Heart left ventricle (tissue), 16 donors: ENCODE measurements at regions of chr6 and their contacts with region 1.

Region 1: GRCh38 chr6:109705258-109705657 is 14.2 kb downstream of the FIG4 start:
- DNase-seq: peak; percentile 72 to 79 (median 75)
- ATAC-seq: peak; percentile 95 to 98 (median 96)
- H3K4me3 ChIP-seq: no peak overlapping the region
- H3K27ac ChIP-seq: no peak overlapping the region
- H3K4me1 ChIP-seq: peaks cover 0 to 56% (median 4%) of the 10 kb centered on the region in 12 donors
- H3K27me3 ChIP-seq: no peaks in the 10 kb centered on the region
- CTCF ChIP-seq: peak; percentile 89 to 99 (median 98)
- POLR2A ChIP-seq: no peak

Region 2: GRCh38 chr6:109783250-109783986 is 78.2 kb after region 1 on chr6:
- intact Hi-C with region 1: loop called in 5 of 10 experiments (anchors 1 to 10 kb)
- DNase-seq: no peak
- ATAC-seq: no peak
- H3K4me3 ChIP-seq: no peak overlapping the region
- H3K27ac ChIP-seq: no peak overlapping the region
- H3K4me1 ChIP-seq: no peaks in the 10 kb centered on the region
- H3K27me3 ChIP-seq: no peaks in the 10 kb centered on the region
- CTCF ChIP-seq: peak in 10 of 12 donors; percentile 12 to 42 (median 31)
- POLR2A ChIP-seq: no peak

Region 3: DNA sequence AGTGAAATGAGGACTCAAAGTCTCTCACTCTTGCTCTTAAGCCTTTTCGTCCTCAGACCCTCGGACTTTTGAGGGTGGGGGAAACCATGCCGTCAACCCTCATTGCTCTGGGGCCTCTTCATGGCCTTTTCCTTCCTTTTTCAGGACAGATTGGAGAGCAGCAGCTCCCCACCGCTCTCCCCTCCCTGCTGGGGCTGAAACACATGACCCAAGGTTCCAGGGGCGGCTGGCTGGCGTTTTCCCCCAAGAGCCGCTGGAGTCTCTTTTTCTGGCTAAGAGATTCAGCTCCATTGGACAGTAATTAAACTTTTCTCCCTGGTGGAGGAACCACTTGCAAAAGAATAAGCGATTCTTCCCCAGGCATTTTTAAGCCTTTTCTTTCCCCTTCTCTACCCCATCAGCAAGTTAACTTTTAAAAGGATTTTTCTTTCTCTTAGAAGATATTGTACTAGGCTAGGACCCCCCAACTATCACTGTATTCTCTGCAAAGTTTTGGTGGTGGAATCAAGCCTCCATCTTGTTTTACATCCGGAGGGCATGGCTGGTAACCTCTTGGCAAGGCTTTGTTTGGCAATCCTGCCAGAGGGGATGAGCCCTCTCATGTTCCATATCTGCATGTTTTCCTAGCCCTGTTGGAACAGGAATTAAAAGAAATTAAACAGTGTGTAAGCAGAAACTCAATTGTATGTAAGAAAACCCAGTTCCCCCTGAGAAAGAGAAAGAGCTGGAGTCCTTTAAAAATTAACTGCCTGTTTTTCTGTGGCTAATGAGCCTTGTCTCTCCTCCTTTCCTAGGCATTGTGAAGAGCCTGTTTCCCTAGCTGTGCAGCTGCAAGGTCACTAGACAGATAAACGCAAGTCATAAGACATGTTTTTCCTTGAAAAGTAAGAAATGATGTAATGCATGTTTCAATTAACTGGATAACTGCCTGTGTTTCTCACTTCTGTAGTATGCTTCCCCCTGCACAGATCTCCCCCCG is 172.1 kb after region 1 on chr6:
- intact Hi-C with region 1: loop called in 1 of 10 experiments (anchors 10 kb)
- DNase-seq: no peak
- ATAC-seq: no peak
- H3K4me3 ChIP-seq: no peak overlapping the region
- H3K27ac ChIP-seq: peak overlapping the region in 1 of 12 donors; percentile 14
- H3K4me1 ChIP-seq: peaks cover 0 to 21% (median 0%) of the 10 kb centered on the region in 12 donors
- H3K27me3 ChIP-seq: no peaks in the 10 kb centered on the region
- CTCF ChIP-seq: no peak
- POLR2A ChIP-seq: no peak

Region 4: GRCh38 chr6:110053395-110054240 is 348.4 kb after region 1 on chr6:
- intact Hi-C with region 1: loop called in 3 of 10 experiments (anchors 1 to 5 kb)
- DNase-seq: peak in 1 of 5 donors; percentile 19
- ATAC-seq: peak in 3 of 4 donors; percentile 44 to 72 (median 59)
- H3K4me3 ChIP-seq: no peak overlapping the region
- H3K27ac ChIP-seq: no peak overlapping the region
- H3K4me1 ChIP-seq: peaks cover 0 to 3% (median 0%) of the 10 kb centered on the region in 12 donors
- H3K27me3 ChIP-seq: peaks cover 0 to 4% (median 0%) of the 10 kb centered on the region in 9 donors
- CTCF ChIP-seq: peak; percentile 47 to 82 (median 71)
- POLR2A ChIP-seq: no peak

Region 5: DNA sequence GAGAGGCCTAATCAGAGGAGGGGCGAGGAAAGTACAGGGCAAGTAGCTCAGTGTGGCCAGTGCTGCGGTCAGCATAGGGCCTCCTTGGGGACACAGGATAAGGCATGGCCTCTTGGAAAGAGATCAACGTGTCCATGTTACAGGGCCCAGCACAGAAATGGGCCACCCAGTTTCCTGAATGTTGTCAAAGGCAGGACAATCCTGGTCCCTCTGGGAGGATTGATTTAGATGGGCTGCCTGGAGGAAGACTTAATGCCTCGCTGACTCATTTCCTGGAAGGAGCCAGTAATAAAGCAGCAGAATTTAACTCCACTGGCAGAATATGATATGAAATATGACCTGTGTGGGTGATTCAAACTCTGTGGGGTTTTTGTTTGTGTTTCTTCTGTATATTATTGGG is 693.5 kb after region 1 on chr6:
- intact Hi-C with region 1: loop called in 6 of 10 experiments (anchors 5 to 10 kb)
- DNase-seq: no peak
- ATAC-seq: peak in 1 of 4 donors; percentile 38
- H3K4me3 ChIP-seq: no peak overlapping the region
- H3K27ac ChIP-seq: no peak overlapping the region
- H3K4me1 ChIP-seq: peaks cover 0 to 23% (median 7%) of the 10 kb centered on the region in 12 donors
- H3K27me3 ChIP-seq: no peaks in the 10 kb centered on the region
- CTCF ChIP-seq: no peak
- POLR2A ChIP-seq: no peak